ENCODE measurements at regions of chr11 and their contacts with region 1.

Region 1: DNA sequence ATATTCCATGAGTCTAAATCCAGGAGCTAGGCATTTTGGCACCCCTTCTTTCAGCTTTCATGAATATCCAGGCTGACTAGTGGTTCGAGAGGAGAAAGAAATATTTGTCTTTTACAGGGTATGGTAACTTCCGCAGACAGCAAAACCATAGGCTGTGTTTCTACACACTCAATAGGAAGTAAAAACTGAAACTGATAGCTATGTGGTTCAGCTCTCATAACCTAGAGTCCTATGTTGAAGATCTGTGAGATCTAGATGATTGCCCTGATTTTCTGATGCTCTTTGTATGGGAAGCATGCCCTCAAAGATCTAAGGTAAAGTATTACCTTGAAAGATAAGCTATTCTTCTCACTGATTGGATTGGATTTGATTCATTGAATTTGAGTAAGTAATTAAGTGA is 118.3 kb downstream of the CD44 start:
- DNase-seq: peak in 5 of 9 donors; percentile 41 to 47 (median 44)
- ATAC-seq: peak; percentile 93
- H3K4me3 ChIP-seq: peak overlapping the region; percentile 32
- H3K4me3 Mint-ChIP-seq: peak overlapping the region; percentile 1 to 76 (median 66)
- H3K27ac ChIP-seq: peak overlapping the region; percentile 30
- H3K27ac Mint-ChIP-seq: peak overlapping the region; percentile 54 to 96 (median 84)
- H3K4me1 ChIP-seq: peaks cover 19 to 25% of the 10 kb centered on the region in 2 donors
- H3K4me1 Mint-ChIP-seq: peaks cover 16 to 58% (median 33%) of the 10 kb centered on the region in 7 donors
- H3K27me3 ChIP-seq: no peaks in the 10 kb centered on the region
- H3K27me3 Mint-ChIP-seq: peaks cover 0 to 51% (median 0%) of the 10 kb centered on the region in 5 donors

Region 2: DNA sequence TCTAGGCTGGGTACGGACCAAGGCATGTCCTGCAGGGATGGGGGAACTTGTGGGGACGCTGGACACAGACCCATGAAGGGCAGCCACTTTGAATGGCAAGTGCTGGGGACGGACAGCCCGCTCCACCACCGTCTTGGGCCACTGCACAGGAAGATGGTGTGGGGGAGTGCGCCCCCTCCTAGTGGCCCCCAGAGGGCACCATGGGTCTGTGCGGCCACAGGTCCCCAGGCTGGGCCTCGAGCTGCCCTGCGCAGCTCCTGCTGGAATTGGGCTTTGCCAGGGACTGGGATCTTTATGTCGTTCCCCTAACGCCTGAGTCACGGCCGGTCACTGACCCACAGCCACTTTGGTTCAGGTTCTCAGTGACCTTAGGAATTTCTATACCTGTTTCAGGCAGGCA is 1107.5 kb before region 1 on chr11:
- CTCF ChIA-PET with region 1: no interaction called
- POLR2A ChIA-PET with region 1: no interaction called
- intact Hi-C with region 1: no loop called
- DNase-seq: no peak
- ATAC-seq: no peak
- H3K4me3 ChIP-seq: no peak overlapping the region
- H3K4me3 Mint-ChIP-seq: no peak overlapping the region
- H3K27ac ChIP-seq: no peak overlapping the region
- H3K27ac Mint-ChIP-seq: no peak overlapping the region
- H3K4me1 ChIP-seq: no peaks in the 10 kb centered on the region
- H3K4me1 Mint-ChIP-seq: peaks cover 0 to 9% (median 6%) of the 10 kb centered on the region in 7 donors
- H3K27me3 ChIP-seq: no peaks in the 10 kb centered on the region
- H3K27me3 Mint-ChIP-seq: no peaks in the 10 kb centered on the region

Region 3: GRCh38 chr11:35126000-35126878 is 131.0 kb before region 1 on chr11:
- CTCF ChIA-PET with region 1: no interaction called
- POLR2A ChIA-PET with region 1: no interaction called
- intact Hi-C with region 1: no loop called
- DNase-seq: peak in 2 of 9 donors; percentile 27 to 62
- ATAC-seq: peak; percentile 59
- H3K4me3 ChIP-seq: peak overlapping the region; percentile 17
- H3K4me3 Mint-ChIP-seq: peak overlapping the region; percentile 42 to 69 (median 60)
- H3K27ac ChIP-seq: peak overlapping the region; percentile 12
- H3K27ac Mint-ChIP-seq: peak overlapping the region; percentile 44 to 92 (median 82)
- H3K4me1 ChIP-seq: peaks cover 33 to 49% of the 10 kb centered on the region in 2 donors
- H3K4me1 Mint-ChIP-seq: peaks cover 32 to 69% (median 64%) of the 10 kb centered on the region in 7 donors
- H3K27me3 ChIP-seq: no peaks in the 10 kb centered on the region
- H3K27me3 Mint-ChIP-seq: peaks cover 0 to 8% (median 0%) of the 10 kb centered on the region in 5 donors

Region 4: DNA sequence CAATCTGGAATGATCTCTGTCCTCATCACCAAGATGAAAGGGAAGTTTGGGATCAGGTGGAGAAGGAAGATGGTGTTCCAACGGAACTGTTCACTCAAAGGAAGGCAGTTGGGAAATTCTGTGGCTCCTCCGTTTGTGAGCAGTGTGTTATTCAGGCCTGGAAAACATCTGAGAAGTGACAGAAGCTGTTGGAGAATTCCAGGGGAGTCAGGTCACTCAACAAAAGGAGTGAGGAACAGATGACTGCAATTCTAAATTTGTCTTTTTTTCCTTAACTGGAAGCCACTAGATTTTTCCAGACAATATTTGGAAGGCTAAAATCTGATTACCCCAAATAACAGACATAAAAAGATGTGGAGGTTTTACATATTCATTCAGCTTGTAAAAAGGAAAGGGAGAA is 10.5 kb before region 1 on chr11:
- CTCF ChIA-PET with region 1: interaction called, 8 read pairs
- POLR2A ChIA-PET with region 1: interaction called, 11 read pairs
- intact Hi-C with region 1: loop called in 1 of 2 experiments (anchors 2 kb)
- DNase-seq: no peak
- ATAC-seq: no peak
- H3K4me3 ChIP-seq: no peak overlapping the region
- H3K4me3 Mint-ChIP-seq: peak overlapping the region in 5 of 10 donors; percentile 14 to 81 (median 70)
- H3K27ac ChIP-seq: peak overlapping the region; percentile 75
- H3K27ac Mint-ChIP-seq: peak overlapping the region; percentile 40 to 100 (median 99)
- H3K4me1 ChIP-seq: peaks cover 58 to 63% of the 10 kb centered on the region in 2 donors
- H3K4me1 Mint-ChIP-seq: peaks cover 24 to 92% (median 69%) of the 10 kb centered on the region in 7 donors
- H3K27me3 ChIP-seq: no peaks in the 10 kb centered on the region
- H3K27me3 Mint-ChIP-seq: peaks cover 0 to 4% (median 0%) of the 10 kb centered on the region in 5 donors

Region 5: DNA sequence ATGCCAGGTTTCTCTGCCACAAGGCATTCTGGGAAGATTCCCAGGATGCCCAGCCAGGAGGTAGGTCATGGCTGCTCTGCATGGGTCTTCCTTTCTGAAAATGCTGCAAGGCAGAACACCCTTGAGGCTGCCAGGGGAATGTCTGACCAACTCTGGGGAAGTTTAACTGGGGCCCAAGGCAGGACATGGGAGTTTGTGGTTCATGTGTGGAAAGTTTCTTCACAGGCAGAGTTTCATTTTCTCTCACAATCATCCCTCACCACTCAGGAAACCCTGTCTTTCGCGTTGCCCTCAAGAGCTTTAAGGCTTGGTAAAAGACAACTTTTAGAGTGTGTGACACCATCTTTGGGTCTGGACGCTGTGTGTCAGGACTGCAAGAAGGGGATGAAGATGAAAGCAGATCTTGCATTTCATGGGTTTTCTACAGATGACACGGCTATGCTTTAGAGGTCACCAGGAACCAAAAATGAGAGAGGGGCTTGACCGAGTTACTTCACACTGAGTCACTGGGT is 15.2 kb after region 1 on chr11:
- CTCF ChIA-PET with region 1: no interaction called
- POLR2A ChIA-PET with region 1: interaction called, 4 read pairs
- intact Hi-C with region 1: loop called in 1 of 2 experiments (anchors 2 kb)
- DNase-seq: peak in 5 of 9 donors; percentile 11 to 58 (median 15)
- ATAC-seq: peak; percentile 85
- H3K4me3 ChIP-seq: peak overlapping the region; percentile 15
- H3K4me3 Mint-ChIP-seq: peak overlapping the region in 9 of 10 donors; percentile 26 to 54 (median 45)
- H3K27ac ChIP-seq: no peak overlapping the region
- H3K27ac Mint-ChIP-seq: peak overlapping the region; percentile 22 to 94 (median 82)
- H3K4me1 ChIP-seq: peaks cover 14 to 21% of the 10 kb centered on the region in 2 donors
- H3K4me1 Mint-ChIP-seq: peaks cover 21 to 56% (median 51%) of the 10 kb centered on the region in 7 donors
- H3K27me3 ChIP-seq: no peaks in the 10 kb centered on the region
- H3K27me3 Mint-ChIP-seq: peaks cover 0 to 9% (median 0%) of the 10 kb centered on the region in 5 donors

Measured in naive thymus-derived CD4-positive, alpha-beta T cell (primary cell).